ENCODE measurements at regions of chr22 and their contacts with region 1.

Region 1: GRCh38 chr22:50186761-50187523 is 1.2 kb downstream of the TRABD start:
- DNase-seq: peak; percentile 33
- ATAC-seq: no peak
- H3K4me3 ChIP-seq: peak overlapping the region; percentile 77
- H3K27ac ChIP-seq: peak overlapping the region; percentile 29
- H3K4me1 ChIP-seq: peaks cover 43% of the 10 kb centered on the region
- H3K27me3 ChIP-seq: no peaks in the 10 kb centered on the region
- CTCF ChIP-seq: no peak

Region 2: DNA sequence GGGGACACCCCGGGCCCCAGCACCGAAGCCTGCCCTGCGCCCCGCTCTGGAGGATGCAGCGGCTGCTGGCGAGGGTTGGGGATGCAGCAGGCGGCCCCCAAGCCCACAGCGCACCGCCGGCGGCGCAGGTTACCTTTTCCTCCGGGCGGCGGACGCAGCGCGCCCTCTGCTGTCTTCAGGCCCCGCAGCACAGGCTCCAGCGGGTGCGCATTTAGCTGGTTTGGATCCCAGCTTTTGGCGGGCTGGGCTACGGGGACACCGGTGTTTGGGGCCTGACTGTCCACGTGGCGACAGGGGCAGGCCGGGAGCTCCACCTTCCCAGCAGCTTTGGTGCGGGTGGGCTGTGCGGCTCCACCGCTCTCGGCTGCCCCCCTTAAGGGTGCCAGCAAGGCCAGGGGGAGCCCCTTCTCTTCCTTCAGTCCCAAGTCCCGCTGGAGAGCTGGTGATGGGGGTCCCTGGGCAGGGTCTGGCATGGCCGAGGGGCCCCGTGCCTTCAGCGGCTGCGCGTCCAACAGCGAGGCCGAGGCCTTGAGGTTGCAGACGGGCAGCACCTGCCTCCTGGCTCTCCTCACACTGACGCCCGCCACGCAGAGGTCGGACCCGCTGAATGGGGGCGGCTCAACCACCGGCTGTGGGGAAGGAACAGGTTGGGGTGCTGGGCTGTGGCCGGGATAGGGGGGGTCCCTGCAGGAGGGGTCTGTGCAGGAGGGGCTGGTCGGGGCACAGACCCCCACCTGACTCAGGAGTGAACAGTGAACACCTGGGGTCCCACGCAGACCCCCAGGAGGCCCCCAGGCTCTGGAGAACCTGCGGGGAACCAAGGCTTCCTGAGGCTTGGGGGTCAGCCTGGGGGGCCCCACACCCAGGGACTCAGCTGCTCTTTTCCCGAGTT is 156.4 kb before region 1 on chr22:
- CTCF ChIA-PET with region 1: no interaction called
- POLR2A ChIA-PET with region 1: no interaction called
- intact Hi-C with region 1: no loop called
- DNase-seq: peak; percentile 80
- ATAC-seq: peak; percentile 79
- H3K4me3 ChIP-seq: peak overlapping the region; percentile 56; the same call in 1 of the 2 replicates
- H3K27ac ChIP-seq: no peak overlapping the region
- H3K4me1 ChIP-seq: peaks cover 8% of the 10 kb centered on the region
- H3K27me3 ChIP-seq: no peaks in the 10 kb centered on the region
- CTCF ChIP-seq: peak; percentile 67

Region 3: DNA sequence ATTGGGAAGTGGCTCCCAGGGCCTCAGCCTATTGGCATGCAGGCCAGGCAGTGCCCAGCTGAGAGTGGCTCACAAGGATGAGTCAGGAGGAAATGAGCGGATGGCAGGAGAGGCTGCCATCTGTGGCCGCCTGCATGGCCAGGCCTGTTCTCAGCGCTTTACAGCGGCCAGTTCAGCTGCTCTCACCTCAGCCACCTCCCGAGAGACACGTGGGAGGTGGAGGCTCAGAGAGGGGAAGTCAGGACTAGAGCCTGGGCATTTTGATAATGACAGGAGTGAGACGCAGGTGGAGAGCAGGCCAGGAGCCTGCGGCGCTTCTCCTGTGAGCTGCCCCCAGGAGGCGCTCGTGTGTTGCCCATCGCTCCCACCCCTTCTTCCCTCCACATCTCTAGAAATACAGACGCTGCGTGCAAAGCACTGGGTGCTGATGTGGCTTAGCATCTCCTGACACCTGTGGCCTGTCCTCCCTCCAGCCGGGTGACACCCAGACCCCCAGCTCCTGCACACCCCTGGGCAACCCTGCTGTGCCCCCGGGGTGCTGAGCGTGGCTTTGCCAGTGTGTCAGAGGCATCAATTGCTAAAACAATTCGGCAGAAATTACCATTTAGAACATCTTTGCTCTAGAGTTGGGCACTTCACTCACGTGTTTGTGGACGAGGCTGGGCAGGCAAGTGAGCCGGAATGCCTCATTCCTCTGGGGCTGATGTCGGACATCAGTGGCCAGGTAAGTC is 37.8 kb before region 1 on chr22:
- CTCF ChIA-PET with region 1: no interaction called
- POLR2A ChIA-PET with region 1: no interaction called
- intact Hi-C with region 1: loop called (anchors 1 kb)
- DNase-seq: peak; percentile 72
- ATAC-seq: peak; percentile 97
- H3K4me3 ChIP-seq: peak overlapping the region; percentile 50; the same call in 1 of the 2 replicates
- H3K27ac ChIP-seq: no peak overlapping the region
- H3K4me1 ChIP-seq: no peaks in the 10 kb centered on the region
- H3K27me3 ChIP-seq: no peaks in the 10 kb centered on the region
- CTCF ChIP-seq: peak; percentile 88

Region 4: DNA sequence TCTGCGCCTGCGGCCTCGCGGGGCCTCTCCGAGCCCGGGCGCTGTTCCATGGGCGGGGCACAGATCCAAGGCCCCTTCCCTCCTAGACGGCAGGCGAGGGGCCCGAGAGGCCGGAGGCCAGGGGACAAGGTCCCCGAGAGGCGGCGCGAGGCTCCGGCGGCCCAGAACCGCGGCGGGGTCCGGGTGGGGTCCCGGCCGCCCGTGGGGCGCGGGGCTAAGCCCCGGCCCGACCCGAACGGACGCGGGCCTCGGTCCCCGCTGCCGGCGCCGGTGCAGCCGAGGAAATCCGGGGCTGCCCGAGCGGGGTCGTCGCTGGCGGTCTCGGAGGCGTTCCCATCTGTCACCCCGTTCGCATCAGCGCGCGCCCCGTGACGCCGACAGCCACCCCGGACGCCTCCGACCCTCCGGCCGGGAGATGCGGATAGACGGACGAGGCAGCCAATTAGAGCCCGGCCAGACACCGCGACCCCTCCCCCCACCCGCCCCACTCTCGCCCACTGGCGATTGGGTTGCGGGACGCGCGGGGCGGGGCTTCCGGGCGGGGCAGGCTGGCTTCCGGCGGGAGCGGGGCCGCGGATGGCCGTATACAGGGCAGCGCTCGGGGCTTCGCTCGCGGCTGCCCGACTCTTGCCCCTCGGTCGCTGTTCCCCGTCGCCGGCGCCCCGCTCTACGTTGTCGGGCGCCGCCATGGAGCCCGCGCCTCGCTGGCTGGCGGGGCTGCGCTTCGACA is 13.7 kb after region 1 on chr22 and contains the start of gene SELENOO:
- CTCF ChIA-PET with region 1: no interaction called
- POLR2A ChIA-PET with region 1: no interaction called
- intact Hi-C with region 1: no loop called
- DNase-seq: peak; percentile 80
- ATAC-seq: peak; percentile 82
- H3K4me3 ChIP-seq: peak within 1 kb of the TSS; percentile 89
- H3K27ac ChIP-seq: no peak within 1 kb of the TSS
- H3K4me1 ChIP-seq: peaks cover 3% of the 10 kb centered on the region
- H3K27me3 ChIP-seq: no peaks in the 10 kb centered on the region
- CTCF ChIP-seq: no peak
- total RNA-seq, gene SELENOO: 32.8 and 37.4 TPM in 2 replicates

Measured in PC-3 (cell line).